CD4-positive, alpha-beta T cell (primary cell): ENCODE measurements at regions of chrX and their contacts with region 1.

Region 1: GRCh38 chrX:3037218-3037617 is 4.1 kb upstream of the ARSF start:
- DNase-seq: no peak
- ATAC-seq: no peak
- H3K4me3 ChIP-seq: no peak overlapping the region
- H3K4me3 Mint-ChIP-seq: no peak overlapping the region
- H3K27ac ChIP-seq: no peak overlapping the region
- H3K27ac Mint-ChIP-seq: no peak overlapping the region
- H3K4me1 ChIP-seq: no peaks in the 10 kb centered on the region
- H3K4me1 Mint-ChIP-seq: no peaks in the 10 kb centered on the region
- H3K27me3 ChIP-seq: no peaks in the 10 kb centered on the region
- H3K27me3 Mint-ChIP-seq: no peaks in the 10 kb centered on the region
- CTCF ChIP-seq: no peak

Region 2: GRCh38 chrX:3811331-3812311 is 774.4 kb after region 1 on chrX:
- CTCF ChIA-PET with region 1: no interaction called
- POLR2A ChIA-PET with region 1: no interaction called
- intact Hi-C with region 1: loop called in 1 of 2 experiments (anchors 10 kb)
- DNase-seq: peak in 12 of 14 experiments; percentile 7 to 83 (median 30)
- ATAC-seq: no peak
- H3K4me3 ChIP-seq: no peak overlapping the region
- H3K4me3 Mint-ChIP-seq: peak overlapping the region; percentile 68
- H3K27ac ChIP-seq: no peak overlapping the region
- H3K27ac Mint-ChIP-seq: peak overlapping the region; percentile 47
- H3K4me1 ChIP-seq: peaks cover 14% of the 10 kb centered on the region
- H3K4me1 Mint-ChIP-seq: peaks cover 9% of the 10 kb centered on the region
- H3K27me3 ChIP-seq: peaks cover under 1 to 5% of the 10 kb centered on the region in 2 experiments
- H3K27me3 Mint-ChIP-seq: peaks cover 26% of the 10 kb centered on the region
- CTCF ChIP-seq: peak; percentile 61